ENCODE measurements at regions of chr6 and their contacts with region 1.

Region 1: DNA sequence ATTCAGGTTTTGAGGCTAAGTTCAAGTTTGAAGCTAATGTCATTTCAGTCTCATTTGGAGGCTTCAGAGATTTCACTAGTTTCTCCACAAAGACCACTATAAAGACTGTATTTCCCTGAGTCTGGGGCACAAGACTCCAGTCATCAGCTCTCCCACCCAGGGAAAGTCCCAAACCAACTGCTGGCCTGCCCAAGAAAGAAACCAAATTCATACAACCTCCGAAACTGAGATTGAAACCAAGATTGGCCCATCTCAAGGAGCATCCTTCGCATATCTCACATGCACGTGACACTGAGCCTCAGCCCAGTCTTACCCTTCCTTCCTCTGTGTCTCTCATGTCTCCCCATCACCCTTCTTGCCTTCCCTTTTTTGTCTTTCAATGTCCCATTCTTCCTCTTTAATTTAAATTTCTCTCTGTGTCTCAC is 3.5 kb upstream of the LTA start:
- DNase-seq: no peak
- ATAC-seq: no peak
- H3K4me3 ChIP-seq: no peak overlapping the region
- H3K27ac ChIP-seq: no peak overlapping the region
- H3K4me1 ChIP-seq: no peaks in the 10 kb centered on the region
- H3K27me3 ChIP-seq: no peaks in the 10 kb centered on the region
- CTCF ChIP-seq: no peak

Region 2: DNA sequence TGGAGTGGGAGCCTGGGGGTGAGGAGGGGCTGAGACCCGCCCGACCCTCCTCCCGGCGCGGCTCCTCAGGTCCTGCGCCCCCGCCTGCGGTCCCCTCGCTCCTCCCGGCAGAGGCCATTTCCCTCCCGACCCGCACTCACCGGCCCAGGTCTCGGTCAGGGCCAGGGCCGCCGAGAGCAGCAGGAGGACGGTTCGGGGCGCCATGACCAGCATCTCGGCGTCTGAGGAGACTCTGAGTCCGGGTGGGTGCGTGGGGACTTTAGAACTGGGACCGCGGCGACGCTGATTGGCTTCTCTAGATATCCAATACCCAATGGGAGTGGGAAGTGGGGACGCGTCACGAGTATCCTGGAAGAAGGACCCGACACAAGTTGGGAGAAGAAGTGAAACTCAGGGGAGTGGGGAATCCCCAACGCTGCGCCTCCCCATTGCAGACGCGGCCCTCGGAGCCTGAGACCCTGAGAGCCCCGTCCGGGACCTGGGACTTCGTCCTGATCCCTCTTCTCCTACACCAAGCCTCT is 211.5 kb before region 1 on chr6 and contains the start of gene HLA-B:
- CTCF ChIA-PET with region 1: no interaction called
- POLR2A ChIA-PET with region 1: no interaction called
- in situ Hi-C with region 1: no loop called
- intact Hi-C with region 1: no loop called
- DNase-seq: peak; percentile 53
- ATAC-seq: peak; percentile 94
- H3K4me3 ChIP-seq: peak within 1 kb of the TSS; percentile 61 to 62
- H3K27ac ChIP-seq: peak within 1 kb of the TSS; percentile 51; the same call in 1 of the 2 replicates
- H3K4me1 ChIP-seq: 0 out of 2 replicates have a peak, but pooled peaks cover 4% of the 10 kb centered on the region
- H3K27me3 ChIP-seq: peaks cover 14% of the 10 kb centered on the region
- CTCF ChIP-seq: no peak
- total RNA-seq, gene HLA-B: 191 TPM

Region 3: GRCh38 chr6:31493875-31494694 is 74.5 kb before region 1 on chr6:
- CTCF ChIA-PET with region 1: no interaction called
- POLR2A ChIA-PET with region 1: no interaction called
- in situ Hi-C with region 1: no loop called
- intact Hi-C with region 1: no loop called
- DNase-seq: no peak
- ATAC-seq: peak; percentile 73
- H3K4me3 ChIP-seq: peak overlapping the region; percentile 79 to 83
- H3K27ac ChIP-seq: peak overlapping the region; percentile 95
- H3K4me1 ChIP-seq: peaks cover 11% of the 10 kb centered on the region; the same call in 1 of the 2 replicates
- H3K27me3 ChIP-seq: no peaks in the 10 kb centered on the region
- CTCF ChIP-seq: peak; percentile 95

Region 4: GRCh38 chr6:31660381-31661261 is 92.1 kb after region 1 on chr6 and contains the start of gene C6orf47:
- CTCF ChIA-PET with region 1: interaction called, 13 read pairs
- POLR2A ChIA-PET with region 1: no interaction called
- in situ Hi-C with region 1: no loop called
- intact Hi-C with region 1: no loop called
- DNase-seq: no peak
- ATAC-seq: peak; percentile 89
- H3K4me3 ChIP-seq: peak within 1 kb of the TSS; percentile 99
- H3K27ac ChIP-seq: peak within 1 kb of the TSS; percentile 98
- H3K4me1 ChIP-seq: peaks cover 31% of the 10 kb centered on the region
- H3K27me3 ChIP-seq: no peaks in the 10 kb centered on the region
- CTCF ChIP-seq: no peak
- total RNA-seq, gene C6orf47: 22.4 TPM